ENCODE measurements at regions of chr3 and their contacts with region 1.

Region 1: DNA sequence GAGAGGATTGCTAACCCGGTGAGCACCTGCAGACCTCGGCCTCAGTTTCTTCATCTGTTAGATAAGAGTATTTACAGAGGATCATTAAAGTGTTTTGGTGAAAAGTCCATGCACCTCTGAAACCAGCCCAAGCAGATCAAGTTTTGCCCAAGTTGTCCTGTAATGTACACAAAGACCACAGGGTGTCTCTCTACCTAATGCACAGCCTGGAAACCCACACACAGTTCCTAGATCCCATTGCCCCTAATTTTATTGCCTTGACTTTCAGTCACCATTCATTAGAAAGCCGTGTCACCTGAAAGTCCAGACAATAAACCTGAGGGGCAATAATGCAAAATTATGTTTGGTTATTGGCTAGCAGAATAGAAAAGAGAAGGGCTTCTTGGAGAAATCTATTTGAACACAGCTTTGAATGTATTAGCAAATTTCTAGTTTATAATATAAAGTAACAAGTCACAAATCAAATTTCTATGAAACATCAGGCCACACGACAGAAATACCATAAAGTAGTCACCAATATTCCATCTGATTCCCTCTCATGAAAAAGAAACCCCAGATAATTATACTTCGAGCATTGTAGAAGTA is 161.3 kb upstream of the SLC2A2 start:
- DNase-seq: peak; percentile 73
- H3K4me3 Mint-ChIP-seq: no peak overlapping the region
- H3K27ac Mint-ChIP-seq: no peak overlapping the region
- H3K4me1 Mint-ChIP-seq: peaks cover 52% of the 10 kb centered on the region
- H3K27me3 Mint-ChIP-seq: no peaks in the 10 kb centered on the region

Region 2: DNA sequence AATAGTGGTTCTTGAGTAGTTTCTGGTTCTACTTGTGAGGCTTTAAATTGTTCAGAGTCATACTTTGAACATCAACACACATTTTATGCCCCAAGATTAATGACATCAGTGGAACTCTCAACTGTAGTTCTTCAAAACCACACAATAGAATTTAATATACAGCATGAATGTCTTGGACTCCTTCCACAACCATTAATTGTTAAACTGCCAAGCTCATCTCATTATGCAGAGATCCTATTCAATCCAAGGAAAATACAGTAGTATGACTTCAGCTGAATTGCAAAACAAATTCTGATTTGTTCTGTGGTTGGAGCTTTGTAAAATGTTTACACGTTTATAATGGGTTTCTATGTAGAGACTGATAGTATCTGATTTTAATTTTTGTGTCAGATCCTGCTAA is 37.9 kb after region 1 on chr3:
- intact Hi-C with region 1: loop called (anchors 2 kb)
- DNase-seq: peak; percentile 12
- H3K4me3 Mint-ChIP-seq: no peak overlapping the region
- H3K27ac Mint-ChIP-seq: peak overlapping the region; percentile 69
- H3K4me1 Mint-ChIP-seq: peaks cover 38% of the 10 kb centered on the region
- H3K27me3 Mint-ChIP-seq: no peaks in the 10 kb centered on the region

Region 3: GRCh38 chr3:171257251-171258203 is 69.7 kb after region 1 on chr3:
- intact Hi-C with region 1: loop called (anchors 1 kb)
- DNase-seq: peak; percentile 69
- H3K4me3 Mint-ChIP-seq: peak overlapping the region; percentile 49
- H3K27ac Mint-ChIP-seq: peak overlapping the region; percentile 93
- H3K4me1 Mint-ChIP-seq: peaks cover 81% of the 10 kb centered on the region
- H3K27me3 Mint-ChIP-seq: no peaks in the 10 kb centered on the region

Region 4: GRCh38 chr3:171375666-171376595 is 188.1 kb after region 1 on chr3:
- intact Hi-C with region 1: loop called (anchors 5 kb)
- DNase-seq: no peak
- H3K4me3 Mint-ChIP-seq: no peak overlapping the region
- H3K27ac Mint-ChIP-seq: peak overlapping the region; percentile 22
- H3K4me1 Mint-ChIP-seq: peaks cover 21% of the 10 kb centered on the region
- H3K27me3 Mint-ChIP-seq: no peaks in the 10 kb centered on the region